RWPE1 (cell line): ENCODE measurements at regions of chr5 and their contacts with region 1.

Region 1: DNA sequence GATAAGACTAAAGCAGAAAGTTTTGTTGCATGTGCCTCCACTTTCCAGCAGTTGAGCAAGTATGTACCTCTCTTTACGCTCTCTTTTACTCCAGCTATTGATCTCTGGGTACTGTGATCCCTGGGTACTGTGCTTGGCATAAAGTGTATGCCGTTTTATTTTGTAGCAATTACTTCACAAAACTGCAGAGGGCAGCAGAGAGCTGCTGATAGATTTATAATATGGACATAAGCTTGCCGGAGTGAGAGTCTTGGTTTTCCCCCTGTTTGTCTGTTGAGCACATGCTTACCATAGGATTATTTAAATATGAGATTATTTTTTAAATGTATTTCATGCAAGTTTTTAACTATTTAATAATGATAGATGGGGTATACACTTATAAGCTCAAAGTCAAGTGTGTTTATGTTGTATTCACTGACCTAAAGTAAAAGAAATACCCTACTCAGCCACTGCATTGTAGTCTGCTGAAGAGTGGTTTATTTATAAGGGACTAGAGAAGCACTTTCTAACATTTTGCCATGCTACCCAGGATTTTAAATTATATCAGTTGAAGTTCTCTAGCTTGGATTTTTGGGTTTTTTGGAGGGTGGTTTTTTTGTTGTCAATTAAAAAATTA is 13.0 kb downstream of the TTC1 start:
- DNase-seq: peak; percentile 71
- H3K27ac ChIP-seq: no peak overlapping the region
- CTCF ChIP-seq: peak; percentile 93

Region 2: GRCh38 chr5:160008877-160009590 is 12.9 kb before region 1 on chr5 and contains the start of gene TTC1:
- CTCF ChIA-PET with region 1: interaction called, 10 read pairs
- POLR2A ChIA-PET with region 1: interaction called, 16 read pairs
- DNase-seq: peak; percentile 98
- H3K27ac ChIP-seq: peak within 1 kb of the TSS; percentile 62
- CTCF ChIP-seq: no peak

Region 3: DNA sequence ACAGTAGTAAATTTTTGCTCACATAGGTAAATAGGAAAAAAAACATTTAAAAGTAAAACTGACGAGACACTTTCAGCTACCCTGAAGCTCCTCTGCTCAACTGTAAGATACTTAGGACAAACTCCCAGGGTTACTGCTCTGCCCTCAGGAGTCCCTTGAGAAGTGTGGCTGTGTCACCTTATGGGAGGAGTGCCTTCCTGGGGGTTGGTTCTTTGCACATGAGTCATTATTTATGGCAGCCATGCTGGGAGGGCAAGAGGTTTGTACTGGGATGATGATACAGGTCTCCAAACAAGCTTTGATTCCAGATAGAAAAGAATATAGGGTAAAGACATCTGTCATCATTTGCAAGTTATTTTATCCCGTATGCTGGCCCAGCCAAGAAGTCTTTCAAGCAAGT is 32.9 kb after region 1 on chr5:
- CTCF ChIA-PET with region 1: interaction called, 14 read pairs
- POLR2A ChIA-PET with region 1: no interaction called
- DNase-seq: peak; percentile 30
- H3K27ac ChIP-seq: no peak overlapping the region
- CTCF ChIP-seq: no peak

Region 4: DNA sequence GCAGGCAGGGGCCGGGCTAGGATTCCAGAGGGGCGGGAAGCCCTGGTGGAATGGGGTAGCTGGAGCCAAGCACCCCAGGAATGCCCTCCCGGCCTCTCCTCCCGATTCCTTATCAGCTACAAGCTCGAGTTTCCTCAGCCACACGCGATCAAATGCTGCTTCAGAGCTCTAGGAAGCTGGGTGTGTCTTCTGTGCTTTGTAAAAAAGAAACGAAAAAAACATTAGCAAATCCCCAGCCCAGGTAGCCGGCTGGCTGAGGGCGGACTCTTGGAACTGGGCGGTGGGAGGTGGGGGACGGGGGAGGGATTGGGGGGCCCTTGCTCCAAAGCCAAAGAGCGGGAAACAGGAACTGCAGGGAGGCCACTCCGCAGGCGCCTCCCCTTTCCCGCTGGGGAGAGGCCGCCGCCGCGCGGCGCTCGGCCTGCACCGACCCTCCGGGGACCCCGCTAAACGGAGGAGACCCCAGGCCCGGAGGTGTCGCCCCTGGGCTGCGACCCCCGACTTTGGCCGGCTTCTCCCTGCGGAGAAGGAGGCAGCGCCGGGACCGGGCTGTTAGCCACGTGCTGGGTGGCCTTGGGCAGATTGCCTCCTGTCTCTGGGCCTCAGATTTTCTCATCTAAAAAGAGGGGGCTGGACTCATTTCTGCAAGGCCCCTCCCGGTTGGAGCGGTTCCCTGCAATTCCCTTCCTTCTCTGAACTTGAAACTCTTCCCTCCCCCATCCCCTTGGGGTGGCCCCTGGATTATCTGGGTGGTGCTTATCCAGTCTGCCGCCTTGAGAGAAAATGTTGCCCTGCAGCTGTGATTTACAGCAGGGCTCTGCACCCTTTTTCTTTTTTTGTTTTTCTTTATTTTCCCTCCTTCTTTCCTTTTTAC is 166.4 kb after region 1 on chr5:
- CTCF ChIA-PET with region 1: no interaction called
- POLR2A ChIA-PET with region 1: no interaction called
- DNase-seq: peak; percentile 41
- H3K27ac ChIP-seq: peak overlapping the region; percentile 74
- CTCF ChIP-seq: no peak

Region 5: GRCh38 chr5:160390787-160391696 is 369.1 kb after region 1 on chr5:
- CTCF ChIA-PET with region 1: interaction called, 15 read pairs
- POLR2A ChIA-PET with region 1: no interaction called
- DNase-seq: no peak
- H3K27ac ChIP-seq: no peak overlapping the region
- CTCF ChIP-seq: peak; percentile 75

Region 6: GRCh38 chr5:160399402-160400353 is 377.7 kb after region 1 on chr5 and contains the start of gene FAM200C:
- CTCF ChIA-PET with region 1: interaction called, 10 read pairs
- POLR2A ChIA-PET with region 1: no interaction called
- DNase-seq: peak; percentile 100
- H3K27ac ChIP-seq: peak within 1 kb of the TSS; percentile 76
- CTCF ChIP-seq: no peak